B cell (primary cell): ENCODE measurements at regions of chr3 and their contacts with region 1.

Region 1: DNA sequence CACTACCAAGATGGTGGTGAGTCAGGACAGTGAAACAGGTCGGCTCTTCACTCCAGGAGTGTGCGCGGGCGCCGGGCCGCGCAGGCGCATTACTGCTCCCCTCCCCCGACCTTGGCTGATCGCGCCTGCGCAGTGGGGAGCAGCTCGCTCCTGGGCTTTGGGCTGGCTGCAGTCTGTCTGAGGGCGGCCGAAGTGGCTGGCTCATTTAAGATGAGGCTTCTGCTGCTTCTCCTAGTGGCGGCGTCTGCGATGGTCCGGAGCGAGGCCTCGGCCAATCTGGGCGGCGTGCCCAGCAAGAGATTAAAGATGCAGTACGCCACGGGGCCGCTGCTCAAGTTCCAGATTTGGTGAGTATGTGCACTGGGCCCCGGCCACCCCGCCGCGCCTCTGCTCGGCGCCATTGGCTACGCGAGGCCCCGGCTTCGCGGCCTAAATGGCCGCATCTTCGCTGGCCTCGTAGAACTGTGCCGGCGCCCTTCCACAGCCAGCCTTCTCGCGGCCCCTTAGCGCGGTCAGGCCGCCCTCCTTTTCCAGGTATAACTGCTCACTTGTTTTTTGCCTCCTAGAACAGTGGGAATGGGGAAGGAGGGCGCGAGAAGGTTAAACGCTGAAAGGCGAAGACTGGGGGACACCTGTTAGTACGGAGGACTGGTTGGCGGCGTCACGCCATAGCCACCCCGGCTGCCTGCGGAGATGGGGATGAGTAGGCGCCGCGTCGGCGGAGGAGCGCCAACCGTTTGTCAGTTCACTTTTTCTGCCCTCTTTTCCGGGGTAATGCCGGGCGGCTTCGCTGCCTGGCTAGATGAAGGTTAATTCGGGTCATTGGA is at the start of gene SELENOT:
- DNase-seq: peak; percentile 97
- ATAC-seq: peak; percentile 70
- H3K4me3 ChIP-seq: peak within 1 kb of the TSS; percentile 66 to 90 (median 87)
- H3K4me3 Mint-ChIP-seq: peak within 1 kb of the TSS; percentile 95
- H3K27ac ChIP-seq: peak within 1 kb of the TSS; percentile 99 to 100
- H3K27ac Mint-ChIP-seq: peak within 1 kb of the TSS; percentile 100
- H3K4me1 ChIP-seq: peaks cover 66 to 69% of the 10 kb centered on the region in 2 donors
- H3K4me1 Mint-ChIP-seq: peaks cover 84% of the 10 kb centered on the region
- H3K27me3 ChIP-seq: no peaks in the 10 kb centered on the region
- H3K27me3 Mint-ChIP-seq: no peaks in the 10 kb centered on the region
- CTCF ChIP-seq: peak; percentile 38
- total RNA-seq, gene SELENOT: 73.1 and 76.7 TPM in 2 replicates

Region 2: DNA sequence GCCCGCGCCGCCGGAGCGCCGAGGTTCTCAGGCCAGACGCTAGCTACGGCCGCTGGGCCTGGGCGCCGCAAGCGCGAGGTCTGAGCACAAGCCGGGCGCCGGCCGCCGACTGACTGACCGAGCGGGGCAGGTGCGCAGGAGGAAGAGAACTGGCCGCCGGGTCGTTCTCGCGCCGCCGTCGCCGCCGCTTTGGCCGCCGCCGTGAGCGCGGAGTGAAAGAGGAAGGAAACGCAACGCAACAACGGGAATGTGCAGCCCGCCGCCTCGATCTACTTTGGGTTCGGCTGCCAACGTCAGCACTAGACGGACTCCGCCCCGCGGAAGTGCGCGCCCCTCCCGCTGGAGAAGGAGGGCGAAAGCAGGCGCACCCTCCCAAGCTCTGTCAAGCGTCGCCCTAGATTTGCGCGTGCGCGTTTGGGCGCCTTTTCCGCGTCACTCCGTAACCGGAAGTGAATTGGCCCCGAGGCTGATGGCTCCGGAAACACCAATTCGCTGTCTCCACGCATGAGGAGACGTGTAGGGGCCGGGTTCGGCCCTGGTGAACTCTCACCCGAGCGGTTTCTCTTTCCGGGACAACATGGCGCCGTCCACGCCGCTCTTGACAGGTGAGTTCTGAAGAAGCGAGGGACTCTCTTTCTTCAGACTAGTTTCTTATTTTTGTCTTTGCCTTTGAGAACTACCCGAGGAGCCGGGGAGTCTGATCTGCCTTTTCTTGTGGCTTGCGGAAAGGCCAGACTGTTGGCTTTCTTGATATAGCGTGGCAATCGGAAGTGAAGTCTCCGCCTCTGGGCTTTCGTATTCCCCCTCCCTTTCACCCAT is 56.9 kb before region 1 on chr3 and contains the starts of genes EIF2A and SERP1:
- CTCF ChIA-PET with region 1: interaction called, 3 read pairs
- POLR2A ChIA-PET with region 1: interaction called, 16 read pairs
- intact Hi-C with region 1: loop called (anchors 1 kb)
- DNase-seq: peak; percentile 100
- ATAC-seq: peak; percentile 90
- H3K4me3 ChIP-seq: peak within 1 kb of the TSS; percentile 67 to 96 (median 86)
- H3K4me3 Mint-ChIP-seq: peak within 1 kb of the TSS; percentile 93
- H3K27ac ChIP-seq: peak within 1 kb of the TSS; percentile 87 to 98
- H3K27ac Mint-ChIP-seq: peak within 1 kb of the TSS; percentile 99
- H3K4me1 ChIP-seq: peaks cover 11 to 21% of the 10 kb centered on the region in 2 donors
- H3K4me1 Mint-ChIP-seq: peaks cover 47% of the 10 kb centered on the region
- H3K27me3 ChIP-seq: no peaks in the 10 kb centered on the region
- H3K27me3 Mint-ChIP-seq: no peaks in the 10 kb centered on the region
- CTCF ChIP-seq: no peak
- total RNA-seq, gene EIF2A: 78.8 and 83.1 TPM in 2 replicates
- total RNA-seq, gene SERP1: 78.0 and 84.6 TPM in 2 replicates

Region 3: GRCh38 chr3:150691414-150692040 is 88.2 kb after region 1 on chr3:
- CTCF ChIA-PET with region 1: no interaction called
- POLR2A ChIA-PET with region 1: no interaction called
- intact Hi-C with region 1: no loop called
- DNase-seq: no peak
- ATAC-seq: no peak
- H3K4me3 ChIP-seq: no peak overlapping the region
- H3K4me3 Mint-ChIP-seq: no peak overlapping the region
- H3K27ac ChIP-seq: no peak overlapping the region
- H3K27ac Mint-ChIP-seq: no peak overlapping the region
- H3K4me1 ChIP-seq: no peaks in the 10 kb centered on the region
- H3K4me1 Mint-ChIP-seq: no peaks in the 10 kb centered on the region
- H3K27me3 ChIP-seq: no peaks in the 10 kb centered on the region
- H3K27me3 Mint-ChIP-seq: no peaks in the 10 kb centered on the region
- CTCF ChIP-seq: no peak

Region 4: DNA sequence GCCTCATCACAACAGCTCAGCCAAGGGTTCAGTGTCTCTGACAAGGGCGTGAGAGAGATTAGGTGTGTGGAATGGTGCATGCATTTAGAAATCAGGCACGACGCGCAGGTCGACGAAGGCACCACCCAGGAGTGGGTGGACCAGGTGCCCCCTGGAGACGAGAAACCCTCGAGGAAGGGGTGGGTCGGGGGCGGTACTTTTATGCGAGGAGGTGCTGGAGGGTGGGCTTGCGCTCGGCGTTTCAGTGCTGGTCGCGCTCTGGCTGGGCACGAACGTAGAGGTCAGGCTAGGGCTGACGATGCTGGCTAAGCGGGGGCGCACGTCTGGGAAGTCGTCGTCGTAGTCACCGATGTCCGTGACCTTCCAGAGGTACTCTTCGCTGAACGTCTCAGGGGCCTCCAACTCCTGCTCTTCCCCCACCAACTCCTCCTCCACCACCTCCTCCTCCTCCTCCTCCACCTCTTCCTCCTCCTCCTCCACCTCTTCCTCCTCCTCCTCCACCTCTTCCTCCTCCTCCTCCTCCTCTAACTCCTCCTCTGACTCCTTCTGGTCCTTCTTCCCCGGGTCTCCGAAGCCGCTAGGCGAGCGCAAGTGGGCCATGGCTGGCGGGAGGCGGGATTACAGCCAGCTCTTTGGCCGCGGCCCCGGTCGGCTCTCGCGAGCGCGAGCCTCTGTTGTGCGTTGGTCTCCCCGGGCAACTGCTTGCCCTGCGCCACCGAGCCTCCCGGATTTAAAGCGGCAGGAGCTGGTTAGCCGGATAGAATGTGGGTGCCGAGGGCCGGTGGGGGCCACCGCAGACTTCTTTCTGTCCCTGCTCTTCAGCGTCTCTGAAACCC is 100.2 kb after region 1 on chr3 and contains the start of gene ERICH6:
- CTCF ChIA-PET with region 1: interaction called, 4 read pairs
- POLR2A ChIA-PET with region 1: interaction called, 7 read pairs
- intact Hi-C with region 1: loop called (anchors 1 kb)
- DNase-seq: peak; percentile 93
- ATAC-seq: peak; percentile 92
- H3K4me3 ChIP-seq: peak within 1 kb of the TSS; percentile 68 to 88 (median 76)
- H3K4me3 Mint-ChIP-seq: peak within 1 kb of the TSS; percentile 98
- H3K27ac ChIP-seq: peak within 1 kb of the TSS; percentile 84 to 97
- H3K27ac Mint-ChIP-seq: peak within 1 kb of the TSS; percentile 97
- H3K4me1 ChIP-seq: peaks cover 0 to 13% of the 10 kb centered on the region in 2 donors
- H3K4me1 Mint-ChIP-seq: peaks cover 16% of the 10 kb centered on the region
- H3K27me3 ChIP-seq: no peaks in the 10 kb centered on the region
- H3K27me3 Mint-ChIP-seq: no peaks in the 10 kb centered on the region
- CTCF ChIP-seq: no peak
- total RNA-seq, gene ERICH6: 0.44 TPM in 1 of 2 replicates, not detected in the other

Region 5: DNA sequence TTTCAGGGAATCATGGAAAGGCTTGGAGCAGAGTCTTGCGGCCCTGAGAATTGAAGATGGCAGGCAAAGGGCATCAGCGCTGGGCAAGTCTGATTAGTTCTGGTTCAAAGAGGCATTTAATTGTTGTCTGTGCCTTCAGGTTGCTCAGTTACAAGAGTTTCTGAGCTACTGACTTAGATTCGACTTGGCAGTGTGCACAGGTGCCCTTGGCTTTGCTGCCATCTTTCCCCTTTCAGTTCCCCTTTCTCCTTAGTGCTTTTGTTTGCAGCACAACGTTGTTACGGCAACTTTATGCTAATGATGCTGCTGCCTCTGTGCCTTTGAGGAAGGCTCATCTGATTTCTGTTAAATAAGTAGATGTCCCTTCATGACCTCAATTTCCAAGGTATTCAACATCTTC is 662.5 kb after region 1 on chr3:
- CTCF ChIA-PET with region 1: no interaction called
- POLR2A ChIA-PET with region 1: no interaction called
- intact Hi-C with region 1: loop called (anchors 5 kb)
- DNase-seq: peak; percentile 95
- ATAC-seq: peak; percentile 89
- H3K4me3 ChIP-seq: peak overlapping the region in 1 of 5 experiments; percentile 34
- H3K4me3 Mint-ChIP-seq: peak overlapping the region; percentile 66
- H3K27ac ChIP-seq: peak overlapping the region; percentile 97 to 99
- H3K27ac Mint-ChIP-seq: peak overlapping the region; percentile 99
- H3K4me1 ChIP-seq: peaks cover 44 to 53% of the 10 kb centered on the region in 2 donors
- H3K4me1 Mint-ChIP-seq: peaks cover 66% of the 10 kb centered on the region
- H3K27me3 ChIP-seq: no peaks in the 10 kb centered on the region
- H3K27me3 Mint-ChIP-seq: no peaks in the 10 kb centered on the region
- CTCF ChIP-seq: no peak

Region 6: DNA sequence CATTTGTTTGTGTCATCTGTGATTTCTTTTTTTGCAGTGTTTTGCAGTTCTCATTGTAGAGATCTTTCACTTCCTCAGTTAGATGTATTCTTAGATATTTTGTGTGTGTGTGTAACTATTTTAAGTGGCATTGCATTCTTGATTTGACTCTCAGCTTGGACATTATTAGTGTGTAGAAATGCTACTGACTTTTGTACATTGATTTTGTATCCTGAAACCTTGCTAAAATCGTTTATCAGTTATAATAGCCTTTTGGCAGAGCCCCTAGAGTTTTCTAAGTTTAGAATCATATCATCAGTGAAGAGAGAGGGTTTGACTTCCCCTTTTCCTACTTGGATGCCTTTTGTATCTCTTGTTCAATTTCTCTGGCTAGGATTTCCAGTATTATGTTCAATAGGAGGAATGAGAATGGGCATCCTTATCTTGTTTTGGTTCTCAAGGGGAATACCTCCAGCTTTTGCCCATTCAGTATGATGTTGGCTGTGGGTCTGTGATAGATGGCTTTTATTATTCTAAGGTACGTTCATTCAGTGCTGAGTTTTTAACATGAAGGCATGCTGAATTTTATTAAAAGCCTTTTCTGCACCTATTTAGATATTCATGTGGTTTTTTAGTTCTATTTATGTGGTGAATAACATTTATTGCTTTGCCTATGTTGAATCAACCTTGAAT is 1877.1 kb after region 1 on chr3:
- CTCF ChIA-PET with region 1: no interaction called
- POLR2A ChIA-PET with region 1: no interaction called
- intact Hi-C with region 1: loop called (anchors 10 kb)
- DNase-seq: peak; percentile 42
- ATAC-seq: peak; percentile 17
- H3K4me3 ChIP-seq: peak overlapping the region in 1 of 5 experiments; percentile 42
- H3K4me3 Mint-ChIP-seq: peak overlapping the region; percentile 86
- H3K27ac ChIP-seq: peak overlapping the region; percentile 19 to 61
- H3K27ac Mint-ChIP-seq: peak overlapping the region; percentile 93
- H3K4me1 ChIP-seq: peaks cover 26 to 29% of the 10 kb centered on the region in 2 donors
- H3K4me1 Mint-ChIP-seq: peaks cover 53% of the 10 kb centered on the region
- H3K27me3 ChIP-seq: no peaks in the 10 kb centered on the region
- H3K27me3 Mint-ChIP-seq: no peaks in the 10 kb centered on the region
- CTCF ChIP-seq: no peak